ENCODE measurements at regions of chr18 and their contacts with region 1.

Region 1: GRCh38 chr18:74353169-74353775 is 37.6 kb downstream of the C18orf63 start:
- DNase-seq: peak; percentile 47 to 85 (median 63)
- H3K4me3 ChIP-seq: no peak overlapping the region
- H3K27ac ChIP-seq: no peak overlapping the region
- H3K4me1 ChIP-seq: no peaks in the 10 kb centered on the region
- H3K27me3 ChIP-seq: peaks cover 12% of the 10 kb centered on the region
- CTCF ChIP-seq: peak; percentile 34 to 77 (median 68)
- POLR2A ChIP-seq: no peak

Region 2: GRCh38 chr18:74476140-74476539 is 122.9 kb after region 1 on chr18:
- intact Hi-C with region 1: loop called in 1 of 2 experiments (anchors 10 kb)
- DNase-seq: peak in 2 of 7 donors; percentile 10 to 48
- H3K4me3 ChIP-seq: no peak overlapping the region
- H3K27ac ChIP-seq: no peak overlapping the region
- H3K4me1 ChIP-seq: no peaks in the 10 kb centered on the region
- H3K27me3 ChIP-seq: no peaks in the 10 kb centered on the region
- CTCF ChIP-seq: peak in 4 of 6 experiments; percentile 10 to 46 (median 34)
- POLR2A ChIP-seq: no peak

Region 3: GRCh38 chr18:74534981-74535649 is 181.8 kb after region 1 on chr18:
- intact Hi-C with region 1: loop called in 1 of 2 experiments (anchors 10 kb)
- DNase-seq: peak in 1 of 7 donors; percentile 5
- H3K4me3 ChIP-seq: no peak overlapping the region
- H3K27ac ChIP-seq: no peak overlapping the region
- H3K4me1 ChIP-seq: no peaks in the 10 kb centered on the region
- H3K27me3 ChIP-seq: no peaks in the 10 kb centered on the region
- CTCF ChIP-seq: no peak
- POLR2A ChIP-seq: no peak

Region 4: GRCh38 chr18:74551936-74552555 is 198.8 kb after region 1 on chr18:
- intact Hi-C with region 1: loop called in 1 of 2 experiments (anchors 5 kb)
- DNase-seq: peak; percentile 71 to 94 (median 87)
- H3K4me3 ChIP-seq: no peak overlapping the region
- H3K27ac ChIP-seq: no peak overlapping the region
- H3K4me1 ChIP-seq: peaks cover 0 to 2% of the 10 kb centered on the region in 2 donors
- H3K27me3 ChIP-seq: peaks cover 8% of the 10 kb centered on the region
- CTCF ChIP-seq: peak; percentile 64 to 85 (median 76)
- POLR2A ChIP-seq: no peak

Region 5: GRCh38 chr18:74722237-74722636 is 369.0 kb after region 1 on chr18:
- intact Hi-C with region 1: no loop called
- DNase-seq: peak in 2 of 7 donors; percentile 15 to 29
- H3K4me3 ChIP-seq: no peak overlapping the region
- H3K27ac ChIP-seq: no peak overlapping the region
- H3K4me1 ChIP-seq: no peaks in the 10 kb centered on the region
- H3K27me3 ChIP-seq: no peaks in the 10 kb centered on the region
- CTCF ChIP-seq: no peak
- POLR2A ChIP-seq: no peak

Measured in adrenal gland (tissue), 19 donors.